ENCODE measurements at regions of chr18 and their contacts with region 1.

Region 1: GRCh38 chr18:63823518-63824219 is 48.5 kb downstream of the SERPINB7 start:
- DNase-seq: no peak
- ATAC-seq: peak; percentile 68
- H3K4me3 ChIP-seq: no peak overlapping the region
- H3K27ac ChIP-seq: no peak overlapping the region
- H3K4me1 ChIP-seq: no peaks in the 10 kb centered on the region
- H3K27me3 ChIP-seq: no peaks in the 10 kb centered on the region; a peak in 1 of 4 replicates
- CTCF ChIP-seq: peak; percentile 45 to 50 (median 47); a peak in 5 of 6 replicates
- EP300 ChIP-seq: no peak
- POLR2A ChIP-seq: no peak
- RAD21 ChIP-seq: peak; percentile 50

Region 2: DNA sequence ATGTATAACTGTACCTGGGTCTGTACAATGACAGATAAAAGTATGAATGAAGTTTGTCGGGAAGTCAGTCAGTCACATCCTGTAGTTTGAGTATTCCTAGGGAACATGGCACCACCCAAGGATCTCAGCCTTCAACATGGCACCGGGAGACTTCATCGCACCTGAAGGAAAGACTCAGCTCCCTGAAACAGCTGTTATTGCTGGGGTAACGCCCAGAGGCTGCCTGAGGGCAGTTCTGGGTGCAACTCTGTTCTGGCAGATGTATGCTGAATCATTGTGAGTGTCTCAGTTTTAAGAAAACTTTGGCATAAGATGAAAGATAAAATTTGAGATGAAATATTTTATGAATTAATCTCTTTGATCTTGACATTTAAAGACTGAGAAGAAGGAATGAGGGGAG is 13.9 kb after region 1 on chr18:
- CTCF ChIA-PET with region 1: interaction called, 43 read pairs
- POLR2A ChIA-PET with region 1: interaction called, 3 read pairs
- RAD21 ChIA-PET with region 1: interaction called, 4 read pairs
- SMC1A ChIA-PET with region 1: interaction called, 11 read pairs
- in situ Hi-C with region 1: no loop called
- intact Hi-C with region 1: no loop called
- DNase-seq: no peak
- ATAC-seq: no peak
- H3K4me3 ChIP-seq: no peak overlapping the region
- H3K27ac ChIP-seq: no peak overlapping the region
- H3K4me1 ChIP-seq: no peaks in the 10 kb centered on the region
- H3K27me3 ChIP-seq: no peaks in the 10 kb centered on the region; a peak in 1 of 4 replicates
- CTCF ChIP-seq: no peak
- EP300 ChIP-seq: no peak
- POLR2A ChIP-seq: no peak
- RAD21 ChIP-seq: no peak

Region 3: GRCh38 chr18:63848159-63848558 is 24.5 kb after region 1 on chr18:
- CTCF ChIA-PET with region 1: interaction called, 43 read pairs
- POLR2A ChIA-PET with region 1: no interaction called
- RAD21 ChIA-PET with region 1: interaction called, 8 read pairs
- SMC1A ChIA-PET with region 1: interaction called, 11 read pairs
- in situ Hi-C with region 1: no loop called
- intact Hi-C with region 1: no loop called
- DNase-seq: no peak
- ATAC-seq: peak; percentile 71
- H3K4me3 ChIP-seq: no peak overlapping the region
- H3K27ac ChIP-seq: no peak overlapping the region
- H3K4me1 ChIP-seq: no peaks in the 10 kb centered on the region
- H3K27me3 ChIP-seq: peaks cover 0 to 4% of the 10 kb centered on the region in 2 experiments; a peak in 2 of 4 replicates
- CTCF ChIP-seq: peak; percentile 54 to 64 (median 57); a peak in 5 of 6 replicates
- EP300 ChIP-seq: no peak
- POLR2A ChIP-seq: no peak
- RAD21 ChIP-seq: peak; percentile 73

Measured in GM12878 (cell line).